ENCODE measurements at regions of chr3 and their contacts with region 1.

Region 1: GRCh38 chr3:47989981-47990440 is 26.2 kb downstream of the MAP4 start:
- H3K4me3 Mint-ChIP-seq: no peak overlapping the region
- H3K27ac Mint-ChIP-seq: no peak overlapping the region
- H3K4me1 Mint-ChIP-seq: peaks cover 21% of the 10 kb centered on the region
- H3K27me3 Mint-ChIP-seq: no peaks in the 10 kb centered on the region

Region 2: GRCh38 chr3:47824541-47825473 is 165.2 kb before region 1 on chr3:
- intact Hi-C with region 1: loop called (anchors 2 kb)
- H3K4me3 Mint-ChIP-seq: peak overlapping the region; percentile 86
- H3K27ac Mint-ChIP-seq: peak overlapping the region; percentile 86
- H3K4me1 Mint-ChIP-seq: peaks cover 31% of the 10 kb centered on the region
- H3K27me3 Mint-ChIP-seq: no peaks in the 10 kb centered on the region

Region 3: DNA sequence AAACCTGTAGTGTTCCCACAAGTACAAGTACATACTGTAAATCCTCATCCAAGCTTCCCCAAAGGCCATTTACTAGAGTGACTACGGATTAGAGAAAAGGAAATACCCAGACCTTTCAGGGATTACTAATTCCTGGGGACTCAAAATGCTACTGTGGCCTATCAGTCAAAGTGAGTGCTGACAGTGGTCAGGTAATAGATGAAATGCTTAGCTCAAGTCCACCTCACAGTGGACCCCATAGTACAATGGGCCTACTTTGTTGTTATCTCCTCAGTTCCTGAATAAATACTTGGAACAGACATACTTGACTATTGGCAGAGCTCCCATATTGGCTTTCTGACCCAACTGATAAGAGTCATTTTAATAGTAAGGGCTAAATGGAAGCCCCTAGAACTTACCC is 35.4 kb before region 1 on chr3:
- intact Hi-C with region 1: no loop called
- H3K4me3 Mint-ChIP-seq: no peak overlapping the region
- H3K27ac Mint-ChIP-seq: no peak overlapping the region
- H3K4me1 Mint-ChIP-seq: no peaks in the 10 kb centered on the region
- H3K27me3 Mint-ChIP-seq: no peaks in the 10 kb centered on the region

Measured in dendritic cell treated with granulocyte-macrophage colony-stimulating factor and Interleukin-4, amounts not matched to agents 40 ng/mL and 50 ng/mL, for 4 days (primary cell).